ENCODE measurements at regions of chr7 and their contacts with region 1.

Region 1: GRCh38 chr7:29105752-29106668 is 40.3 kb downstream of the CPVL start:
- DNase-seq: peak; percentile 8
- H3K4me3 ChIP-seq: no peak overlapping the region
- H3K27ac ChIP-seq: no peak overlapping the region
- H3K27me3 ChIP-seq: peaks cover 13% of the 10 kb centered on the region
- CTCF ChIP-seq: peak; percentile 95

Region 2: DNA sequence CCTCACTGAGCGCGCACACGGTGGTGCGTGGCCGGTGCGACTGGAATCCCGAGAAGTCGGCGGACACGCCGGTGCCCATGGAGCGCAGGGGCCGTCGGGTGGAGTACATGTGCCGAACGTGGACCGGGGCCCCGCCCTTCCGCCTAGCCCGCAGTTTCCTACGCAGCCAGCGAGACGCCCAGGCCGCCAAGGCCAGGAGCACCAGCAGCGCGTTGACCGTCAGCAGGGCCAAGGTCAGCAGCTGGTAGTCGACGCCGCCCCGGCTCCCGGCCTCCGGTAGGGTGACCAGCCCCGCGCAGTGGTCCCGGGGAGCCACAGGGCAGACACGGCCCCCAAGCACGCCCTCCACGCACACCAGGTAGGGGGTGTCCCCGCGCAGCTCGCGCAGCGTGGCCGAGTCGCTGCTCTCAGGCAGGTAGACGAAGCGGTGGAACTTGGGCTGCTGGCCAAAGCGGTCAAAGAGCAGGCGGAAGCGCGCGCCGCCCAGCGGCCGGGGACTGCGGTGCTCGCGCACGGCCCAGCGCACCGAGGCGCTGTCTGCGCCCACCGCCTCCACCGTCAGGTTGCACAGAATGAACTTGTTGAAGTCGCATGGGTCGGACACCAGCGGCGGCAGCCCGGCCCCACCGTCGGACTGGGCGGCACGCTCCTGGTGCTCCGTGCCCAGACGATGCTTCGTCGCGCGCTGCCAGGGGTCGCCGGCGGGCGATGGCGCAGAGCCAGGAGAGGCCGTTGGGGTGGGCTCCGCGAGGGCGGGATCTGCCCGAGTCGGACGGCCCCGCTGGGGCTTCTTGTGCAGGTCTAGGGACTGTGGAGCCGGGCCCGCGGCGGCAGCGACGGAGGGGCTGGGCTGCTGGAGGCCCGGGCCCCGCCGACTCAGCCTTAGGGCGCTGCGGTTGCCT is 150.0 kb before region 1 on chr7:
- CTCF ChIA-PET with region 1: interaction called, 18 read pairs
- POLR2A ChIA-PET with region 1: no interaction called
- DNase-seq: no peak
- H3K4me3 ChIP-seq: peak overlapping the region; percentile 10; the same call in 1 of the 2 replicates
- H3K27ac ChIP-seq: no peak overlapping the region
- H3K27me3 ChIP-seq: peaks cover 57% of the 10 kb centered on the region
- CTCF ChIP-seq: peak; percentile 46

Region 3: GRCh38 chr7:29119538-29120199 is 13.7 kb after region 1 on chr7:
- CTCF ChIA-PET with region 1: interaction called, 15 read pairs
- POLR2A ChIA-PET with region 1: no interaction called
- DNase-seq: no peak
- H3K4me3 ChIP-seq: no peak overlapping the region
- H3K27ac ChIP-seq: no peak overlapping the region
- H3K27me3 ChIP-seq: no peaks in the 10 kb centered on the region
- CTCF ChIP-seq: no peak

Region 4: DNA sequence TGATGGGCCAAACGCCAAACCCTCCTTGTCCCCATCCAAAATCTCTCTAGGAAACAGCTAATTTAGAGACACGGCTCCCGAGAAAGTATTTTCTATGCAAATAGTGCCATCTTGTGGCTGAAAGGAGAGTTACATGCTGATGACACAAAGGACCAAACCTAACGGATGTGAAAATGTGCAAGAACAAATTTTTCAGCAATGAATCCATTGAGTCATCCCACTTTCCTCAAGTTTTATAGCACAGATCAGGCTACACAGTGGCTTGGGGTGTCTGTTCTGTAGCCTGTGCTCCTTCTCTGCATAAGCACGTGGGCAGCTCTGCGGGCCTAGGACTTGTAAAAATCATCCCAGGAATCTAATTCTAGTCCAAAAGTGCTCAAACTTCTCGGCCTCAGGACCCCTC is 302.8 kb after region 1 on chr7:
- CTCF ChIA-PET with region 1: interaction called, 16 read pairs
- POLR2A ChIA-PET with region 1: no interaction called
- DNase-seq: peak; percentile 16
- H3K4me3 ChIP-seq: no peak overlapping the region
- H3K27ac ChIP-seq: no peak overlapping the region
- H3K27me3 ChIP-seq: no peaks in the 10 kb centered on the region
- CTCF ChIP-seq: peak; percentile 82

Measured in AG04450 (cell line).